Activated B cell treated with CpG ODN at 0.5 μM for 24 hours (primary cell): ENCODE measurements at regions of chr1 and their contacts with region 1.

Region 1: GRCh38 chr1:160261893-160262794 is at the start of gene DCAF8:
- DNase-seq: peak; percentile 95
- ATAC-seq: peak; percentile 91
- H3K4me3 Mint-ChIP-seq: peak within 1 kb of the TSS; percentile 99
- H3K27ac Mint-ChIP-seq: peak within 1 kb of the TSS; percentile 98
- H3K4me1 Mint-ChIP-seq: peaks cover 47% of the 10 kb centered on the region
- H3K27me3 Mint-ChIP-seq: no peaks in the 10 kb centered on the region
- CTCF ChIP-seq: no peak
- total RNA-seq, gene DCAF8: 155 and 172 TPM in 2 replicates

Region 2: GRCh38 chr1:159924981-159925712 is 337.0 kb before region 1 on chr1 and contains the start of gene TAGLN2:
- CTCF ChIA-PET with region 1: no interaction called
- POLR2A ChIA-PET with region 1: interaction called, 4 read pairs
- intact Hi-C with region 1: loop called (anchors 10 kb)
- DNase-seq: peak; percentile 94
- ATAC-seq: peak; percentile 69
- H3K4me3 Mint-ChIP-seq: peak within 1 kb of the TSS; percentile 99
- H3K27ac Mint-ChIP-seq: peak within 1 kb of the TSS; percentile 99
- H3K4me1 Mint-ChIP-seq: peaks cover 56% of the 10 kb centered on the region
- H3K27me3 Mint-ChIP-seq: no peaks in the 10 kb centered on the region
- CTCF ChIP-seq: no peak
- total RNA-seq, gene TAGLN2: 327 and 364 TPM in 2 replicates

Region 3: GRCh38 chr1:160277330-160277729 is 15.2 kb after region 1 on chr1:
- CTCF ChIA-PET with region 1: no interaction called
- POLR2A ChIA-PET with region 1: interaction called, 13 read pairs
- intact Hi-C with region 1: no loop called
- DNase-seq: no peak
- ATAC-seq: no peak
- H3K4me3 Mint-ChIP-seq: no peak overlapping the region
- H3K27ac Mint-ChIP-seq: no peak overlapping the region
- H3K4me1 Mint-ChIP-seq: peaks cover 4% of the 10 kb centered on the region
- H3K27me3 Mint-ChIP-seq: no peaks in the 10 kb centered on the region
- CTCF ChIP-seq: no peak

Region 4: GRCh38 chr1:160284782-160285344 is 22.7 kb after region 1 on chr1 and contains the start of gene PEX19:
- CTCF ChIA-PET with region 1: interaction called, 54 read pairs
- POLR2A ChIA-PET with region 1: interaction called, 46 read pairs
- intact Hi-C with region 1: loop called (anchors 1 kb)
- DNase-seq: peak; percentile 85
- ATAC-seq: peak; percentile 100
- H3K4me3 Mint-ChIP-seq: peak within 1 kb of the TSS; percentile 95
- H3K27ac Mint-ChIP-seq: peak within 1 kb of the TSS; percentile 87
- H3K4me1 Mint-ChIP-seq: peaks cover 24% of the 10 kb centered on the region
- H3K27me3 Mint-ChIP-seq: no peaks in the 10 kb centered on the region
- CTCF ChIP-seq: no peak
- total RNA-seq, gene PEX19: 43.7 and 50.3 TPM in 2 replicates

Region 5: DNA sequence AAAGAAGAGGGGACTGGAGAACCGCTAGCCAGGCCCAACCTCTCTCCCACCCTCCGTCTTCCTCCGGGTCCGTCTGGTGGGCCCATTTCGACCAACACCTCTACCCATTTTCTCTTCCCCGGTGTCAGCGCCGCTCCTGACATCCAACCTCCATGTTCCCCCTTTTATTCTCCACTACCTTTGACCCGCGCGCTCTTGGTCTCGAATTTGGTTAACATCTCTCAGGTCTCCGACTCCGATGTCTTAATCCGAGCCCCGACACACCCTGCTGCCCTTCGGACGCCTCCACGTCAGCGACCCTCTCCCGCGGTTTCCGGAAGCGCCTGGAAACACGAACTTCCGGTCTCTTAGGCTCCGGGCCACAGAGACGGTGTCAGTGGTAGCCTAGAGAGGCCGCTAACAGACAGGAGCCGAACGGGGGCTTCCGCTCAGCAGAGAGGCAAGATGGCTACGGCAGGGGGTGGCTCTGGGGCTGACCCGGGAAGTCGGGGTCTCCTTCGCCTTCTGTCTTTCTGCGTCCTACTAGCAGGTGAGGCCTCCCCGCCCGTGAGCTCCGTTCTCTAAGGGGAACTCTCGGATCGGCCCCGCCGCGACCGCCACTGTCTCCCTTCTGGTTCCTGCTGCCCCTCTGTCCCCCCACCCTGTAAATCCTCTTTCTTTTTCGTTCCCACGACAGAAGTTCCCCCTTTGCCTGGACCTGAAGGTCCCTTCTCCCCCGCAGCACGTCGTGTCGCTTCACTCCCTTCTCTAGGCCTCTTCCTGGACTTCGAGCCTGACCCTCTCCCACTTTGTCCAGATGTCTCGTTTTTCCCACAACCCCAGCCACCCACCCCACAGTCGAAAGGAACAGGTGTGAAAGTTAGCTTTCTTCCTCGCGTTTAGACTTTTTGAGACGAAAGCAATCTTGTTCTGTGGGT is 81.1 kb after region 1 on chr1 and contains the starts of genes COPA and NCSTN:
- CTCF ChIA-PET with region 1: no interaction called
- POLR2A ChIA-PET with region 1: interaction called, 18 read pairs
- intact Hi-C with region 1: loop called (anchors 2 kb)
- DNase-seq: peak; percentile 83
- ATAC-seq: peak; percentile 88
- H3K4me3 Mint-ChIP-seq: peak within 1 kb of the TSS; percentile 99
- H3K27ac Mint-ChIP-seq: peak within 1 kb of the TSS; percentile 98
- H3K4me1 Mint-ChIP-seq: peaks cover 68% of the 10 kb centered on the region
- H3K27me3 Mint-ChIP-seq: no peaks in the 10 kb centered on the region
- CTCF ChIP-seq: no peak
- total RNA-seq, gene COPA: 161 and 174 TPM in 2 replicates
- total RNA-seq, gene NCSTN: 108 and 118 TPM in 2 replicates

Region 6: DNA sequence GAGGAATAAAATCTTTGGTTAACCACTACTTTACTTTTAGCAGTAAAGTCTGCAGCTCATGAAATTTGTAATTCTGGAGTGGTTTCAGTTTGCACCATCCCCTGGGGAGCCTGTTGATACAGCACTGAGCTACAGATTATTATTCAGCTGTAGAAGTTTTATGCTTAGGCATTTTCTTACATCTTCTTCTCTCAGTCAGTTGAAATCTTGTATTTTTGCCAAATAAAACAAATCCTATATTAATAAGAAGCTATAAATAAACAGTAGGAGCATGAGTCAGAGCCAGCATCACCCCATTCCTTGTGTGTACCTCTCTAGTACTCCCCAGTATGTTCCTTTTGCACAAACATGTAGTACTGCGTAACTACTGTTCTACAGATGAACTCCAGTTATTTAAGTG is 1622.9 kb after region 1 on chr1:
- CTCF ChIA-PET with region 1: no interaction called
- POLR2A ChIA-PET with region 1: no interaction called
- intact Hi-C with region 1: no loop called
- DNase-seq: no peak
- ATAC-seq: no peak
- H3K4me3 Mint-ChIP-seq: no peak overlapping the region
- H3K27ac Mint-ChIP-seq: no peak overlapping the region
- H3K4me1 Mint-ChIP-seq: no peaks in the 10 kb centered on the region
- H3K27me3 Mint-ChIP-seq: no peaks in the 10 kb centered on the region
- CTCF ChIP-seq: no peak